ENCODE measurements at regions of chr2 and their contacts with region 1.

Region 1: GRCh38 chr2:4827836-4828235 is 864.3 kb upstream of the SOX11 start:
- DNase-seq: no peak
- ATAC-seq: no peak
- H3K4me3 ChIP-seq: no peak overlapping the region
- H3K27ac ChIP-seq: no peak overlapping the region
- H3K4me1 ChIP-seq: no peaks in the 10 kb centered on the region
- H3K27me3 ChIP-seq: no peaks in the 10 kb centered on the region
- CTCF ChIP-seq: no peak
- POLR2A ChIP-seq: no peak
- RAD21 ChIP-seq: no peak

Region 2: DNA sequence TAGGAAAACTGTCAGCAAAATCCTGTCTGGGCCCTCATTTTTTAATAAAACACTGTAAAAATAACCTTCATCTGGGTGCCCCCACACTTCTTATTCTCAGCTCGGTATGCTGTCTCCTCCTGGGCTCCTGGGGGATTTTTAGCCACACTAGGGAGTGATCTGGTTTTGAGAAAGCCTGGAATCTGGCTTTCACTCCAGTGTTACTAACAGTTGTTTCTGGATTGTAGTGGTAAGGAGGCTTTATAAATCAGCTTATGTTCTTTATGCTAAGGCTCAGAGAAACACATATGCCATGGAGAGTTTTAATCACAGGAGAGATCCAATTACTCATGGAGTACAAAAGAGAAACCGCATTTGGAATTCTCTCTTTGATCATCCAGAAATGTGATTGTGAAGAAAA is 120.1 kb after region 1 on chr2:
- CTCF ChIA-PET with region 1: no interaction called
- POLR2A ChIA-PET with region 1: no interaction called
- dilution Hi-C with region 1: no loop called
- in situ Hi-C with region 1: no loop called
- intact Hi-C with region 1: no loop called
- DNase-seq: no peak
- ATAC-seq: no peak
- H3K4me3 ChIP-seq: no peak overlapping the region
- H3K27ac ChIP-seq: no peak overlapping the region
- H3K4me1 ChIP-seq: no peaks in the 10 kb centered on the region
- H3K27me3 ChIP-seq: no peaks in the 10 kb centered on the region
- CTCF ChIP-seq: no peak
- POLR2A ChIP-seq: no peak
- RAD21 ChIP-seq: no peak

Region 3: DNA sequence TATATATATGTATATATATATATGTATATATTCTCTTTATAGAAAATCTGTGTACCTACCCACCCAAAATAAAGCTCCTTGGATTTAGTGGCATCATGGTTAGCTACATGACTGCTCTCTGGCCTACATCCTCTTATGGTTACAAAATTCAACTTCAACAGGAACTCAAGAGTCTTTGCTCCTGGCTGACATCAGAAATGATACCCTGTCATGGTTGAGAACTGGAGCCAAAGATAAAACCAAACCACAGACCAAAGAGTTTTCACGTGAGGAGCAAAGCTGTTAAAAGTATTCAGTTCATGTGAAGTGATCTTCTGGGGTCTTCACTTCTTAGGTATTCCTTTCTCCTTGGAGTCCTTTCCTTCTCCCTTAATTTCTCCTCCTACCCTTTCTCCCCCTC is 1340.6 kb after region 1 on chr2:
- CTCF ChIA-PET with region 1: interaction called, 10 read pairs
- POLR2A ChIA-PET with region 1: no interaction called
- dilution Hi-C with region 1: no loop called
- in situ Hi-C with region 1: no loop called
- intact Hi-C with region 1: no loop called
- DNase-seq: no peak
- ATAC-seq: no peak
- H3K4me3 ChIP-seq: no peak overlapping the region
- H3K27ac ChIP-seq: no peak overlapping the region
- H3K4me1 ChIP-seq: no peaks in the 10 kb centered on the region
- H3K27me3 ChIP-seq: no peaks in the 10 kb centered on the region; the same call in 1 of the 2 replicates
- CTCF ChIP-seq: no peak
- POLR2A ChIP-seq: no peak
- RAD21 ChIP-seq: no peak

Measured in IMR-90 (cell line).